ENCODE measurements at regions of chr10 and their contacts with region 1.

Region 1: GRCh38 chr10:102009801-102010425 is 46.1 kb downstream of the ARMH3 start:
- DNase-seq: peak; percentile 79
- H3K4me3 ChIP-seq: no peak overlapping the region
- H3K27ac ChIP-seq: no peak overlapping the region
- H3K4me1 ChIP-seq: peaks cover 6% of the 10 kb centered on the region
- H3K27me3 ChIP-seq: no peaks in the 10 kb centered on the region
- CTCF ChIP-seq: peak; percentile 99 to 100

Region 2: DNA sequence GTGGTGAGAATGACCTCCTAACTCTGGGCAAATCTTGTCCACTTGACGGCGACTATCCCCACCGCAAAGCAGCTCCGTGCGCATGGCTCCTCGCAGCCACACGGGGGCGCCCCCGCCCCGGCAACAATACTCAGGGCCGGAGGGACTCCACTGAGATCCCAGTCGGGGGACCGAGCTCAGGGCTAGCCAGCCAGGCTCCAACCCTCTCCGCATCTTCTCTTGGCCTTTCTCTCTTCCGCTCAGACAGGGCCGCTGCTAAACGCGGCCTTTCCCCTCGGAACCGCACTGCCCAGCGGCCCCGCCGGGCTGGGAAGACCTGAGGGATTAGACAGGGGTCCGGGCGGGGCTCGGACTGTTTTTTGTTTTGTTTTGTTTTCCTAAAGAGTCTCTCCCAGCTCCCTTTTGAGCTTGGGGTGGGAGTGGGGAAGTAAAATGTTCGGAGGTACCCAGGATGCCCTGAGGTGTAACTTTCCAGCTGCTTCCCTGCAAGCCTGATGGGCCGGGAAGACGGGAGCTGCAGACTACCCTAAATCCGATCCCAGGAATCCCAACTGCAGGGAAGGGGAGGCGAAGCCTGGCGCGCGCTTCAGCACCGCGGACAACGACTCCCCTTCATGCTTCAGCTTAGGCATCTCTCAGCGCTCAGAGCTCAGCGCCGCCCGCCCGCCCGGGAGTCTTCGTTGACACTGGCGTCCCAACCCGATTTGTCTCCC is 169.0 kb before region 1 on chr10:
- CTCF ChIA-PET with region 1: interaction called, 32 read pairs
- dilution Hi-C with region 1: no loop called
- in situ Hi-C with region 1: loop called (anchors 5 kb)
- intact Hi-C with region 1: loop called (anchors 1 kb)
- DNase-seq: peak; percentile 64
- H3K4me3 ChIP-seq: peak overlapping the region; percentile 9 to 40 (median 28)
- H3K27ac ChIP-seq: no peak overlapping the region
- H3K4me1 ChIP-seq: peaks cover 14% of the 10 kb centered on the region
- H3K27me3 ChIP-seq: no peaks in the 10 kb centered on the region
- CTCF ChIP-seq: peak; percentile 87 to 98

Region 3: DNA sequence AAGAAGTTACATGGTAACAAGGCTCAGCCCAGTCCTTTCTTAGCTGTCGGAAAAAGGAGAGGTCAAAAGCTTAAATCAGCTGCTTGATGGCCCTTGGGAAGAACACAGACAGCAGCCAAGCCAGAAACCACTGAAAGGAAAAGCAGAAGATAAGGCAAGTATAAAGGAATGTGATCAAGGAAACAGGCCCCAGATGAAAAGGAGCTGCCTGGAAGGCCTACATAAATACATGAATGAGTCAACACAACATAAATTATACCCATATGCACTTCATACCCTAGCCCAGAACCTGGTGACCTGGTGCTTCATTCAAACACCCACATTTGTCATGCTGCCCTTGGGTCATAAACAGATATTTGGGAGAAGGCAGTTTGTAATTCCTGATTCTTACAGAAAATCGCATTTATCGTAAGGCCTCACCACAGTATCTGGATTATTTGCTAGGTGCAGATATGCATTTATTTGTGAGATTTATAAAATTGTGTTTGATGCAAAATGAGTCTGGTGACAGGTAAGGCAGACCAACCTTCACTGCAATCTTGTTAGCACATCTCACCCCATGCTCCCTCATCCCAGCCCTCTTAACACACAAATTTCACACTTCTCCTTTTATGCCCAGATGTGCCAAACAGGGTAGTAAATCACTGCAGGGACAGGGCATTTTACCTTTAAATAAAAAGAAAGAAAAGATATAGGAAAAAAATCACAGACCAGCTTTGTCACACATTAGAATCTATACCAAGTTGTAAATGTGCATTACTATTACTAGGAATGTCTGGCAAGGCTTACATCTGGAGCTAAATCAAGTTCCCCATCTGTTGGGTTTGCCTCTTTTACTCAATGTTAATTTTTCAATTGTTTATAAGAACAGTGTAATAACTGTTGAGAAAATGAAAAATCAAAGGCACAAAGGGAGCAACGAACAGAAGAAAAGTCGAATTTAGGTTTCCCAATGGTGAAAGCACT is 71.3 kb before region 1 on chr10:
- CTCF ChIA-PET with region 1: no interaction called
- dilution Hi-C with region 1: no loop called
- in situ Hi-C with region 1: no loop called
- intact Hi-C with region 1: loop called (anchors 2 kb)
- DNase-seq: peak; percentile 54
- H3K4me3 ChIP-seq: no peak overlapping the region
- H3K27ac ChIP-seq: peak overlapping the region; percentile 68
- H3K4me1 ChIP-seq: peaks cover 22% of the 10 kb centered on the region
- H3K27me3 ChIP-seq: no peaks in the 10 kb centered on the region
- CTCF ChIP-seq: no peak

Region 4: DNA sequence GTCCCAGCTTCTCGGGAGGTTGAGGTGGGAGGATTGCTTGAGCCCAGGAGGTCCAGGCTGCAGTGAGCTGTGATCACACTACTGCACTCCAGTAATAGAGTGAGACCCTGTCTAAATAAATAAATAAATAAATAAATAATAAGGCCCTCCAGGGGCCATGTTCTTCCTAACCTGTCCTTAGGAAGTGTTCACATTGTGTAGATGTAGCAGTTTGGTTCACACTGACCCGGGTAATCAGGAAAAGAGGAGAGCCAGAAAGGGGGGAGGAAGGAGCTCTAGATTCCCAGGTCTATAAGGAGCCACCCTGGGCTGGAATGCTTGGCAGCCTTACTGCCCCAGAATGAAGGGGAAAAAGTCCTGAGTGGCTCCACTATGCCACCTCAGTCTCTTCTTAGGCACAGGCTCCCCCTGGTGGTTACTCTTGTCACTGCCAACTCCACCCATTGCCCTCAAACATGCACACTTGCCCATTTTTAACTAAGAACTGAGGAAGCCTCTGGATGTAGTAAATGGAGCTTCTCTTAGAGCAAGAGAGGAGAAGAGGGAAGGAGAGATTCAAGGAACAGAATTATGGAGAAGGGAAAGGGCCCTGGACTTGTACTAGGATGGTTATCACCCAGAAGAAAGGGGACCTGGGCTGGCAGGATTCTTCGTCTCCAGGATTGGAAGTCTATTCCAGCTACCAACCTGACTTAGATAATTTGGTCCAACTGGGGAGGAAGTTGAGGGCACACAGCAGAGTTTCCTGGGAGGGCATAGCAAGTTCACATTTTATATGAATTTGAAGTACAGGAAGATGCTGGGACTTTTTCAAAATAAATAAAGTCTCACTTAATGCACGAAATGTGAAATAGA is 63.0 kb after region 1 on chr10:
- CTCF ChIA-PET with region 1: no interaction called
- dilution Hi-C with region 1: no loop called
- in situ Hi-C with region 1: no loop called
- intact Hi-C with region 1: loop called (anchors 1 kb)
- DNase-seq: peak; percentile 52
- H3K4me3 ChIP-seq: no peak overlapping the region
- H3K27ac ChIP-seq: no peak overlapping the region
- H3K4me1 ChIP-seq: no peaks in the 10 kb centered on the region
- H3K27me3 ChIP-seq: no peaks in the 10 kb centered on the region
- CTCF ChIP-seq: peak; percentile 95 to 99

Measured in mammary epithelial cell (primary cell).